Left colon (tissue), 2 donors: ENCODE measurements at regions of chr19 and their contacts with region 1.

Region 1: DNA sequence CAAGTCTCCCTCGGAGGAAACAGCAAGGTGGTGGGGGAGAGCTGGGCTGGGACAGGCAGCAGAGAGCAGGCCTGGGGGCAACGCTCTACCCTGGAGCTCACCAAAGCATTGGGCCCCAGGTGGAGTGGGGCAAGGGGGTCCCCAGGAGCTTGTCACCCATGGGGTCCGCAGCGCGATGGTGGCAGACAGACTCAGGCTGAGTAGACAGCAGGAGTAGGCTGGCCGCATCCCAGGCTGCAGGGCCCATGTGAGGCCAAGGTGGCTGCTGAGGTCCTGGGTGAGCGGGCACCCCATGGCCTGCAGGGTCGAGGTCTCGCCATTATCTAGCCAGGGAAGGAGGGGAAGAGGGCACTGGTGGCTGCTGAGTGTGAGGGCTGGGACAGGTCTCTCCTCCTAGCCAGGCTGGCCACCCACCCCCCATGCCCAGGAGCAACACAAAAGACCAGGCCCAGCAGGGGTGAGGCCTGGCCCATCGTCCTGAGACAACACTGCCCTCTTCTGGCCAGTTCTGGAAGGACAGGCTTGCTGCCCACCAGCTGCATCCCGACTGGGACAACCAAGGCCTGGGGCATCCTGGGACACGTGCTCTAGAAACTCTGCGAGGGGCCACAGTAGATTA is 33.1 kb downstream of the CEBPG start:
- DNase-seq: peak in 1 of 2 donors; percentile 82
- ATAC-seq: peak; percentile 60

Region 2: DNA sequence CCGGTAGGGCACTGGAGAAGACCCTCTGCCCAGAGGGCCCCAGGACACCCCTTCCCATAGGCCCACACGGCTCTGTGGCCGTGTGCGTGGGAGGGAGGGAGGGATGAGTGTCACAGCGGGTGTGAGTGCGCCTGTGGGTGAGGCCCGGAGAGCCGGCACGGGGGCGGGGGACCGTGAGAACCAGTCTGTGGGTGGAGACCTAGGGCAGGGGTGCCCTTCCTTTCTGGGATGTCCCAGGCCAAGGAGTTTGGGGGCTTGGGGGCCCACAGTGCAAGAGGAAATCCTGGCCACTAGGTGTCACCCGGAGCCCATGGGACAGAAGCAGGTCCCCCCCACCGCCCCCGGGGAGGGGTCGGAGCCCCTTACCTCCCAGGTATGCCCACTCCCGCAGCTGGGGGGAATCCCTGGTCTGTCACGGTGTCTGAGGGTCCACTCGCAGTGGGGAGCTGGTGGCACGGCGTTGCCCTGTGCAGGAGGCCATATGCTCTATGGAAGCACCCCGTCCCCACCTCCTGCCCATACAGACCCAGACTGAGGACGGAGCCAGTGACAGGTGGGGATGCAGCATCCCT is 165.0 kb before region 1 on chr19:
- intact Hi-C with region 1: loop called (anchors 2 to 5 kb)
- DNase-seq: peak in 1 of 2 donors; percentile 57
- ATAC-seq: peak; percentile 78

Region 3: DNA sequence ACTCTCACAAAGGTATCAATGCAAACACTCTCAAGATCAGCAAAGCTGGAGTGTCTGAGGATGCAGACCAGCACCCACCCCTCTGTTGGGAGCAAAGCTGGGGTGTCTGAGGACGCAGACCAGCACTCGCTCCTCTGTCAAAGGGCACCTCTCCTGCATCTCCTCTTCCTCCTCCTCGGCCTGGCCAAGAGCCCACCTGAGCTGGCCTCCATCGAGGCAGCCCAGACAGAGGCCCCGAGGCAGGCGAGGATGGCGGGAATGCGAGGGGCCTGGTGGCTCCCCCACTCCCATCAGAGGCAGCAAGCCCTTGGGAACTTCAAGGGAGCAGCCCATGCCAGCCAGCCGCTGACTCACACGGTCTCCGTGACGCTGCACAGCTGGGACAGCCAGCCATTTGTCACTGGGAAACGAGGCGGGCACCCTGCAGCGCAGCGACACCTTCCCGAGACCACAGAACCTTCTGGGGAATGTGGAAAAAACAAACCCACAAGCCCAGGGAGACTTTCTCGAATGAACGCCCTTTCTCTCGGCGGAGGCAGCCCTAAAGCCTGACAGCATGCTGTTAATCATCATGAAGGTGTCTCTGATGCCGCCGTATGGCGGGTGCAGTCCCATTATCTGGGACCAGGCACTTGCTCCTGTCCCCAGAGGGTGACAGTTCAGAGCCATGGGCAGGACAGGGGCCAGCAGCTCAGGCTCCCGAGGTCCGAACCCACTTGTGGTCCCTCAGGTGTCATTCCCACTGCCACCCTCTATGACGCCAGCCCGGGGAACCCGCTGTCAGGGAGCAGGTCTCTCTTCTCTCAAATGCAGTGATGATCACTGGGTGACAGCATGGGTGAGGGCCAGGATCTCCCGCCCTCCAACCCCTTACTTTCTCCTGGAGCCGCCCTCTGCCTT is 61.9 kb after region 1 on chr19:
- intact Hi-C with region 1: no loop called
- DNase-seq: no peak
- ATAC-seq: no peak